Cardiac septum (tissue), 1 donor: ENCODE measurements at regions of chr17 and their contacts with region 1.

Region 1: GRCh38 chr17:61389670-61390478 is 9.8 kb upstream of the TBX2 start:
- DNase-seq: no peak

Region 2: GRCh38 chr17:61217878-61218837 is 171.7 kb before region 1 on chr17:
- intact Hi-C with region 1: loop called (anchors 10 kb)
- DNase-seq: no peak

Region 3: DNA sequence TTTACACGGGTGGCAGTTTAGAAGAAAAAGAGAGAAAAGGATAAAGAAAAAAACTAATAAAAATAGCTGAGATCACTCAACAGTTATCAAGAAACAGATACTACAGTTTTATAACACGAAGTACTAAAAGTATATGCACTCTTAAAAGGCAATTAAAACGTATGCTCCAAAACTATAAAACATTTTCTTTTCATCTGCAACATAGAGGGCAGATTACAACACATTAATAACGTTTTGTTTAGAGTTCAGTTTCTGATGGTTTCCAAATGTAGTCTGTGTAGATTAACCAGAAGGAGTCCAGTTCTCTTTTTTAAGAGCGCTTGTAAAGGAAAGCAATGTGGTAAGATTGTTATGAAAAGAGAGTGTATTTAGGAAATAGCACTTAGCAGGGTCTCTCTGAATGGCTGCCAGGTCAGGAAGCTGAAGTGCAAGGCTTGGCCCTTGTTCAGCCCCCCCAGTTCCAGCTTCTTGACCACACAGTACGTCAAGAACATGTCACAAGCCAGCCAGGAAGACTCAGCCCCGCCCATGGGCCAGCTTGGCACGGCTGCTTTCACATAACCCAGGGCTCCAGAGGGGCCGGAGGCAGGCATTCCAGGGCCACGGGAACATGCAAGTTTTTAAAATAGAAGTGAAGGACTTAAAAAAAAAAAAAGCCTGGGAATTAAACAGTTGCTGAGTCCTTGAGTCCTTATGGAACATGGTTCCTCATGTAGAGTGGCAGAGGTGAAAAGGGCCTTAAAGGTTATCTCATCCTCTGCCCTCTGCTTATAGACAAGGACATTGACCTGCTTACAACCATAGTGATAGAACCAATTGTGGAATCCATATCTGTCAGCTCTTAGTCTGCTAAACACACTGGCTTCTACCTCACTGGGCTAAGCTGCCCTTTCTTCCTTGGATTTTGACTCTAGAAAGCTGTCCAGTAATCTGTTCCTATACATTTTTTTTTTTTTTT is 137.7 kb before region 1 on chr17:
- intact Hi-C with region 1: loop called (anchors 10 kb)
- DNase-seq: peak; percentile 92